PC-3 (cell line): ENCODE measurements at regions of chr18 and their contacts with region 1.

Region 1: GRCh38 chr18:32470713-32471633 is at the start of gene GAREM1:
- DNase-seq: peak; percentile 81
- ATAC-seq: peak; percentile 85
- H3K4me3 ChIP-seq: peak within 1 kb of the TSS; percentile 71
- H3K27ac ChIP-seq: no peak within 1 kb of the TSS
- H3K4me1 ChIP-seq: peaks cover 4% of the 10 kb centered on the region; the same call in 1 of the 2 replicates
- H3K27me3 ChIP-seq: no peaks in the 10 kb centered on the region
- CTCF ChIP-seq: peak; percentile 33; the same call in 1 of the 2 replicates
- total RNA-seq, gene GAREM1: 0.86 and 1.8 TPM in 2 replicates

Region 2: DNA sequence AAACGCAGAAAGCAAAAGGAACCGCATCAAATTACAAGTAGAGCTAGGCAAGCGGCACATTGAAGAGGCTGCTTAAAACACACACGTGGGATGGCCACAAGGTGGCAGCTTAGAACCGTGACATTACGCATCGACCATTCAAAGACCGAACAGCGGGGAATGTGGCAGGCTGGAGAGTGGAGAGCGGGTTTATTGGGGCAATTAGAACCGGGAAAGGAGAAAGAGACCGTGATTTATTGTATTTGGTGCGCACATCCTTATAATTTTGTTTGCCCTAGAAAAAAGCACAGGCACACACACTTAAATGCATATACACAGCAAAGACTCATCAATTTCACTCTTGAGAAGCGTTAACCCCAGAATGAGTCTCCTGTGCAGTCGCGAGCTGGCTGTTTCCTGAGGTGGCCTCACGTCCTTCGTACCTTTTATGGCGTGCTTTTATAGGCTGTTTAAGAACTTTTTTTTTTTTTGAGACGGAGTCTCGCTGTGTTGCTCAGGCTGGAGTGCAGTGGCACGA is 312.8 kb before region 1 on chr18:
- CTCF ChIA-PET with region 1: interaction called, 11 read pairs
- POLR2A ChIA-PET with region 1: no interaction called
- intact Hi-C with region 1: loop called (anchors 2 kb)
- DNase-seq: peak; percentile 75
- ATAC-seq: peak; percentile 95
- H3K4me3 ChIP-seq: peak overlapping the region; percentile 54; the same call in 1 of the 2 replicates
- H3K27ac ChIP-seq: no peak overlapping the region
- H3K4me1 ChIP-seq: no peaks in the 10 kb centered on the region
- H3K27me3 ChIP-seq: no peaks in the 10 kb centered on the region
- CTCF ChIP-seq: peak; percentile 66

Region 3: DNA sequence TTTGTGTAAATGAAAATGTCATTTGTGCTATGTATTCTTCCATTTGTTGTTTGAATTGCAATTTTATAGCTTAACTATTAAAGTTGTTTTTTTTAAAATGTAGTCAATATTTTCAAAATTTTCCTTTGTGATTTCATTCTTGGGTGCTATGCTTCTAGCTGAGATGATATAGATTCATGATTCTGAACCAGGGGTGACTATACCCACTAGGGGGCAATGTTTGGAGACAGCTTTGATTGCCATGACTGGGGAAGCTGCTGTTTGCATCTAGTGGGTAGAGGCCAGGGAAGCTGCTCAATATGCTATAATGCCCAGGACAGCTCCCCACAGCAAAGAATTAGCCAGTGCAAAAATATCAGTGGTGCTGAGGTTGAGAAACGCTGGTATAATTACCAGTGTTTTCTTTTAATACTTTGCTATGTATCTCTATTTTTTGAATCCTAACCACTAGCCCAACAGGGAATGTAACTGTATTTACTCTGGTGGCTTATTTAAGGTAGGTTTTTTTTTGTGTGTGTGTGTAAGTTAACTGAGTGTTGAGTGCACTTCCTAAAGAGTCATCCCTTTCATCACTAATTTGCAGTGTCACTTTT is 181.4 kb before region 1 on chr18:
- CTCF ChIA-PET with region 1: interaction called, 29 read pairs
- POLR2A ChIA-PET with region 1: no interaction called
- intact Hi-C with region 1: no loop called
- DNase-seq: peak; percentile 56
- ATAC-seq: peak; percentile 73
- H3K4me3 ChIP-seq: no peak overlapping the region
- H3K27ac ChIP-seq: no peak overlapping the region
- H3K4me1 ChIP-seq: no peaks in the 10 kb centered on the region
- H3K27me3 ChIP-seq: no peaks in the 10 kb centered on the region
- CTCF ChIP-seq: peak; percentile 59

Region 4: GRCh38 chr18:32373995-32374394 is 97.0 kb before region 1 on chr18:
- CTCF ChIA-PET with region 1: interaction called, 24 read pairs
- POLR2A ChIA-PET with region 1: no interaction called
- intact Hi-C with region 1: loop called (anchors 2 kb)
- DNase-seq: peak; percentile 34
- ATAC-seq: no peak
- H3K4me3 ChIP-seq: no peak overlapping the region
- H3K27ac ChIP-seq: peak overlapping the region; percentile 87
- H3K4me1 ChIP-seq: peaks cover 31% of the 10 kb centered on the region
- H3K27me3 ChIP-seq: no peaks in the 10 kb centered on the region
- CTCF ChIP-seq: no peak

Region 5: DNA sequence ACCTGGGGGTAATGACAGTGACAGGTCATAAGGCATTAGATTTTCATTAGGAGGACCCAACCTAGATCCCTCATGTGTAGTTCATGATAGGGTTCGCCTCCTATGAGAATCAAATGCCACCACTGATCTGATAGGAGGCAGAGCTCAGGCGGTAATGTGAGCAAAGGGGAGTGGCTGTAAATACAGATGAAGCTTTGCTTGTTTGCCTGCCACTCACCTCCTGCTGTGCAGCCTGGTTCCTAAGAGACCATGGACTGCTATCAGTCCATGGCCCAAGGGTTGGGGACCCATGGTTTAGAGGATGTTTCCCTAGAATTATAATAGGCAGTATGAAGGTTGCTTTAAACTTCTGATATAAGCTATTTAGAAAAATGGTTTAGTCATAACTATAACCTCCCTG is 10.5 kb after region 1 on chr18:
- CTCF ChIA-PET with region 1: no interaction called
- POLR2A ChIA-PET with region 1: no interaction called
- intact Hi-C with region 1: no loop called
- DNase-seq: no peak
- ATAC-seq: no peak
- H3K4me3 ChIP-seq: no peak overlapping the region
- H3K27ac ChIP-seq: no peak overlapping the region
- H3K4me1 ChIP-seq: no peaks in the 10 kb centered on the region
- H3K27me3 ChIP-seq: no peaks in the 10 kb centered on the region
- CTCF ChIP-seq: no peak

Region 6: GRCh38 chr18:32552421-32553030 is 81.6 kb after region 1 on chr18:
- CTCF ChIA-PET with region 1: interaction called, 5 read pairs
- POLR2A ChIA-PET with region 1: no interaction called
- intact Hi-C with region 1: loop called (anchors 2 kb)
- DNase-seq: peak; percentile 65
- ATAC-seq: peak; percentile 66
- H3K4me3 ChIP-seq: no peak overlapping the region
- H3K27ac ChIP-seq: no peak overlapping the region
- H3K4me1 ChIP-seq: no peaks in the 10 kb centered on the region
- H3K27me3 ChIP-seq: no peaks in the 10 kb centered on the region
- CTCF ChIP-seq: peak; percentile 57